ENCODE measurements at regions of chr16 and their contacts with region 1.

Region 1: GRCh38 chr16:57899771-57900661 is 70.9 kb downstream of the CNGB1 start:
- DNase-seq: peak; percentile 48
- ATAC-seq: peak; percentile 68
- H3K4me3 Mint-ChIP-seq: no peak overlapping the region
- H3K27ac Mint-ChIP-seq: no peak overlapping the region
- H3K4me1 Mint-ChIP-seq: no peaks in the 10 kb centered on the region
- H3K27me3 Mint-ChIP-seq: peaks cover 23% of the 10 kb centered on the region
- CTCF ChIP-seq: no peak

Region 2: DNA sequence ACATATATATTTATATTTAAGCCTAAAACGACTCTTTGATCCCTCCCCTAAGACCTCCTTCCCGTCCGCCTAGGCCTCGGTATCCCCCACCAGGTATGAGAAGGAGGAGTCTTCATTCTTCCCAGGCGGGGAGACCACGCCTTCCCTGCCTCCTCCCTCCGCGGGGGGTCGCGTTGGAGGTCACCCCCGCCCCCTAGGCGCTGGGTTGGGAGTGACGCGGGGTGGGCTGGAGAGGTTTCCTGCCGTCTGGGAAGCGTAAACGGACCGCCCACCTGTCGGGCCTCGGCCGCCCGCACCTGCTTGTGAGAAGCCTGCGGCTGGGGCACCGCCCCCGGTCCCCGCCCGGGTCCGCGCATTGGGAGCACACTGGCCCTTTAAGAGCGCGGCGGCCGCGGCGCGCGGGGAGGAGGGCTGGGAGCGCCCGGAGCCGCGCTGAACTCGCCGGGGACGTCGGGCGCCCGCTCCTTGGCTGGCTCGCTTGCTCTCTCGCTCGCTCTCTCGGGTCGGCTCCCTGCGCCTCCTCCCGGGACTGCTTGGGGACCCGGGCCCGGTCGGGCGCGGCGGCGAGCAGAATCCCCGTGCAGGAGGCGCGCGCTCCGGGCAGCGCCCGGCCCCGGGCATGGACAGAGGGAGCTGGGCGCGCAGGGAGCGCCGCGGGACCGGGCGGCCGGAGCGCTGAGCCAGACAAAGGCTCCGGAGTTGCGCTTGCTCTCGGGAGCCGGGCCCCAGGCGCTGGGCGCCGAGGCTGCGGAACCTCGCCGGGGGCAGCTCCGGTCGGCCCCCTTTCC is 125.5 kb after region 1 on chr16 and contains the start of gene MMP15:
- CTCF ChIA-PET with region 1: no interaction called
- POLR2A ChIA-PET with region 1: no interaction called
- intact Hi-C with region 1: no loop called
- DNase-seq: peak; percentile 47
- ATAC-seq: peak; percentile 69
- H3K4me3 Mint-ChIP-seq: peak within 1 kb of the TSS; percentile 84
- H3K27ac Mint-ChIP-seq: peak within 1 kb of the TSS; percentile 36
- H3K4me1 Mint-ChIP-seq: peaks cover 11% of the 10 kb centered on the region
- H3K27me3 Mint-ChIP-seq: peaks cover 23% of the 10 kb centered on the region
- CTCF ChIP-seq: no peak
- total RNA-seq, gene MMP15: 0.60 TPM in 1 of 2 replicates, not detected in the other

Region 3: GRCh38 chr16:58123896-58124600 is 224.0 kb after region 1 on chr16:
- CTCF ChIA-PET with region 1: interaction called, 3 read pairs
- POLR2A ChIA-PET with region 1: no interaction called
- intact Hi-C with region 1: loop called (anchors 2 kb)
- DNase-seq: no peak
- ATAC-seq: no peak
- H3K4me3 Mint-ChIP-seq: no peak overlapping the region
- H3K27ac Mint-ChIP-seq: no peak overlapping the region
- H3K4me1 Mint-ChIP-seq: peaks cover 67% of the 10 kb centered on the region
- H3K27me3 Mint-ChIP-seq: no peaks in the 10 kb centered on the region
- CTCF ChIP-seq: no peak